ENCODE measurements at regions of chr6 and their contacts with region 1.

Region 1: DNA sequence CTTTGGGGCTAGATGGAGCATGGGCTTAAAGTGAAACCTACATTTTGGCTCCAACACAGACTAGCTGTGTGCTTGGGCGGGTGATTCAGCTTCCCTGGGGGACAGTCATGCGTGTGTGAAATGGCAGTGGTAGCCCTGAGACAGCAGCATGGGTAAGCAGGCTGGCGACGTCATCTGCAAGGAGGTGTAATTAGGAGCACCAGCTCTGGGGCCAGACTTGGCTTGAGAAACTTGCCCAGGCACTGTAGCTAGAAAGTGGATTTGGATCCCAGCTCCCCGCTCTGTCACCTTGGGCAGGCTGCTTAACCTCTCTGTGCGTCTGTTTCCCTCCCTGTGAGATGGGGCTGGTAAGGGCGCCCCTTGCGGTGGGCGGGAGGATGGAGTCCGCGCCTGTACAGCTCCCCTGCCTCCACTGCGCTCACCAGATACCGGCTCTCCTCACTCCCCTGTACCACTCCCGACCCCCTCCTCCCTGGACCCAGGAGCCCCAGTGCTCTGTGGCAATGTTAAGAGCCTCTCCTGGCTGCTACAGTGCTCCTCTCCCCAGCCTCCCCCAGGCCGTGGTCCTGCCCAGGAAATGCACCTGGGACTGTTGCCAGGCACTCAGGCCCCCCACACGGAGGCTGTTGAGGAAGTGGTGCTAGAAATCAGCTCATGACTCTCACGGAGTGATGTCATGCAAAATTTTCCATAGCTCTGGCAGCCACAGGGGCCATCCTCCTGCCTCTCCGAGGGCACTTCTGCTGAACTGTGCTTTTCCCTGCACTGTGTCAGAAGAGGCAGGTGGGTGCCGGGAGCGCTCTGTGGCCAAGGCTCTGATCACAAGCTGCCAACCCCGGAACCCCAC is 44.6 kb downstream of the SYNJ2 start:
- DNase-seq: peak; percentile 92
- H3K4me3 ChIP-seq: peak overlapping the region; percentile 3
- H3K27ac ChIP-seq: peak overlapping the region; percentile 97
- H3K27me3 ChIP-seq: no peaks in the 10 kb centered on the region
- CTCF ChIP-seq: peak; percentile 68

Region 2: DNA sequence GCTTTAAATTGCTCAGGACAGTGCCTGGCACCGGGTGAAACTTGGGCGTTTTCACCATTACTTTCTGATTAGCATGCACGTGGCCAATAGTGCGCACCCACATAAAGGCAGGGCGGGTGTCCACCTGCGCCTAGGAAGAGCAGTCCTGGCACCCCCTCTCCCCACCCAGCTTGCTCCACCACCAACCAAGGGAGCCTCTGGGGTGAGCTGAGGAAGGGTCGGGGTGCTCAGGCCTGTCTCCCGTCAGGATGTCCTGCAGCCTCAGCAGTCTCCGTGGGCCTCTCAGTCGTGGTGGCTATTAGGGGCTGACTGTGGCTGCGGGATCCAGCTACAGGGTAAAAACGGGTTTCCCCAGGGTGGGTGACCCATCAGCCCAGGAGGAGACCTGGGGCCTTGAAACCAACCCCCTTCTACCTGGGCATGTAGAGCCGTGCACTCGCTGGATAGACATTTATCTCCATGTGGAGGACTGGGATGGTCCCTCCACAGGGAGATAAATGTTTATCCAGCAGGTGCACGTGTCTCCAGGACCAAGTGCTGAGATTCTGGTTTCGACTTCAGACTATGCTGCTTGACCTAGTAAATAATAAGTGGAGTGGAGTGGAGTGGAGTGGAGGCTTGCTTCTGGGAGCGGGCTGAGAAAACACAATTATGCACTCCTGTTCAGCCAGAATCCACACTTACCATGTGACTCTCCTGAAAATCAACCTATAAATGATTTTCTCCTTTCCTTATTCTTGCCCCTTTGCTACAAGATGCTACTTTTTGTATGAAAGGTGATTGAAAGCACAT is 554.2 kb before region 1 on chr6:
- CTCF ChIA-PET with region 1: no interaction called
- POLR2A ChIA-PET with region 1: no interaction called
- DNase-seq: no peak
- H3K4me3 ChIP-seq: no peak overlapping the region
- H3K27ac ChIP-seq: no peak overlapping the region
- H3K27me3 ChIP-seq: peaks cover 2% of the 10 kb centered on the region
- CTCF ChIP-seq: no peak

Region 3: DNA sequence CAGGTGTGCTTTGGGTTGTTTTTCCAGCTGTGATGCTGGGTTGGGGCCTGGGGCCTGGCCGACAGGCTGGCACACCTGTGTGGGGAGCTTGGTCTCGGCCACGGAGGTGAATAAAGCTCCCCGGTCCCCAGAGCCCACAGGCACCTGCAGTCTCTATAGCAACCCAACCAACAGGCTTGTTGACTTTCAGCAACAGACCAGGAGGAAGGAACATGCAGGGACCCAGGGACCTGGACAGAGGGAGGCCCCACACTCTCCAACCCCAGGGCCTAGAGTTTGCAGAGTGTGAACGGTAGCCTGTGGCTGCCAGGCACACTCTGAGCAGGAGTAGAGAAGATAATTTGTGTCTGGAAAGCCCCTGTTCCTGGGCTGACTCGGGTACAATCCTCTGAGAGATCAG is 59.3 kb before region 1 on chr6:
- CTCF ChIA-PET with region 1: no interaction called
- POLR2A ChIA-PET with region 1: no interaction called
- DNase-seq: no peak
- H3K4me3 ChIP-seq: no peak overlapping the region
- H3K27ac ChIP-seq: no peak overlapping the region
- H3K27me3 ChIP-seq: no peaks in the 10 kb centered on the region
- CTCF ChIP-seq: no peak

Region 4: GRCh38 chr6:157981395-157982296 is 44.6 kb before region 1 on chr6 and contains the start of gene SYNJ2:
- CTCF ChIA-PET with region 1: interaction called, 15 read pairs
- POLR2A ChIA-PET with region 1: interaction called, 3 read pairs
- DNase-seq: peak; percentile 63
- H3K4me3 ChIP-seq: peak within 1 kb of the TSS; percentile 79
- H3K27ac ChIP-seq: peak within 1 kb of the TSS; percentile 65
- H3K27me3 ChIP-seq: no peaks in the 10 kb centered on the region
- CTCF ChIP-seq: peak; percentile 60
- polyA plus RNA-seq, gene SYNJ2: 38.1 and 40.8 TPM in 2 replicates

Region 5: DNA sequence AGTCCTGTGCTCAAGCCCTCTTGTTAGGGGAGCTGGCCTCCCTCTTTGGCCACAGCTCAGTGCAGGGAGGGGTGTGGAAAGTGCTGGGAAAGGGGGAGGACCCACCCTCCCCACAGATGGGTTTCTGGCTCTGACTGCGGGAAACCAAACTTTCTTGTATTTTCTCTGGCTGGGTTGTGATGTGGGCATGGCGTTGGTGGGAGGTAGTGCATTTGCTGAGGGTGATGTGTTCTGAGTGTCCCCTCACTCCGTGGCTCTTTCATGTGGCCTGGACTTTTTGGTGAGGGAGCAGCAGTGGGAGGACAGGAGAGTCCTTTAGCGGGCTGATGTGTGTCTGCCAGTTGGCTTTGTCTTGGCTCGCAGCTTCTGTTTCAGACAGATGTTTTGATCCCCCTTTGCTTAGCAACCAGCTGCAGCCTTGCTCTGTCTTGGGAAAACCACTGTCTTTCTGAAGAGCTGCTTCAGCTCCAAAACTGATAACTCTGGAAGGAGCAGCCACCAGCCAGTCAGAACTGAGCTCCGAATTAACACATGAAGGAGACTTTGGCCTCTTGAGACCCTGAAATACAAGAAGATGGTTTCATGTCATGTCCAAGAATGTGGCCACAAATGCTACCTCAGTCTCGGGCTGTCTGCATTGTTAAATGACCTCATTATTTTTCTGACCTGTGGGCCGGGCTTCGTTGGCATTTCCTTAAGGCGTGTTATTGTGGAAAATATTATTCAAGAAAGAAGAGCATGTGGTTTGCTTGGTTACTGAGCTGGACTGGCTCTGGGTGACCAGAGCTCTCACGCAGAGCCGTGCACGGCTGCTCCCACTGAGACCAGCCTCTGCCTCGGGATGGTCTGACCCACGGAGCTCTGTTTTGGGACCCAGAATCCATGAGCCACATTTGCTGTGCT is 23.1 kb before region 1 on chr6:
- CTCF ChIA-PET with region 1: interaction called, 10 read pairs
- POLR2A ChIA-PET with region 1: interaction called, 3 read pairs
- DNase-seq: no peak
- H3K4me3 ChIP-seq: peak overlapping the region; percentile 12; the same call in 1 of the 2 replicates
- H3K27ac ChIP-seq: peak overlapping the region; percentile 94
- H3K27me3 ChIP-seq: no peaks in the 10 kb centered on the region
- CTCF ChIP-seq: no peak

Region 6: GRCh38 chr6:158014505-158015187 is 11.6 kb before region 1 on chr6:
- CTCF ChIA-PET with region 1: interaction called, 14 read pairs
- POLR2A ChIA-PET with region 1: interaction called, 6 read pairs
- DNase-seq: no peak
- H3K4me3 ChIP-seq: no peak overlapping the region
- H3K27ac ChIP-seq: peak overlapping the region; percentile 52
- H3K27me3 ChIP-seq: no peaks in the 10 kb centered on the region
- CTCF ChIP-seq: no peak

Region 7: DNA sequence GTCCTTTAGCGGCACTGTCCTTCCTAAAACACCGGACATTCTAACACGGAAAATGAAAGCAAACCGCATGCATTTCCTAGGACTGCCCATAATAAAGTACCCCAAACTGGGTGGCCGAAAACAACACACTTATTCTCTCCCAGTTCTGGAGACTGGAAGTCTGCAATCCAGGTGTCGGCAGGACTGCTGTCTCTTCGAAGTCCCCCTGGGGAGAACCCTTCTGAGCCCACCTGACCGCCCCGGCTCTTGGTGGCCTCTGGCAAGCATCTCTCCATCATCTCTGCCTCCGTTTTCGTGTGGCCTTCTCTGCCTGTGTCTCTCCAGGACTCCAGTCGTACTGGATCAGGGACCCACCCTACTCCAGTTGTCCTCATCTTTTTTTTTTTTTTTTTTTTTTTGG is 10.7 kb after region 1 on chr6:
- CTCF ChIA-PET with region 1: interaction called, 12 read pairs
- POLR2A ChIA-PET with region 1: interaction called, 7 read pairs
- DNase-seq: no peak
- H3K4me3 ChIP-seq: no peak overlapping the region
- H3K27ac ChIP-seq: no peak overlapping the region
- H3K27me3 ChIP-seq: no peaks in the 10 kb centered on the region
- CTCF ChIP-seq: no peak